RWPE1 (cell line): ENCODE measurements at regions of chr11 and their contacts with region 1.

Region 1: DNA sequence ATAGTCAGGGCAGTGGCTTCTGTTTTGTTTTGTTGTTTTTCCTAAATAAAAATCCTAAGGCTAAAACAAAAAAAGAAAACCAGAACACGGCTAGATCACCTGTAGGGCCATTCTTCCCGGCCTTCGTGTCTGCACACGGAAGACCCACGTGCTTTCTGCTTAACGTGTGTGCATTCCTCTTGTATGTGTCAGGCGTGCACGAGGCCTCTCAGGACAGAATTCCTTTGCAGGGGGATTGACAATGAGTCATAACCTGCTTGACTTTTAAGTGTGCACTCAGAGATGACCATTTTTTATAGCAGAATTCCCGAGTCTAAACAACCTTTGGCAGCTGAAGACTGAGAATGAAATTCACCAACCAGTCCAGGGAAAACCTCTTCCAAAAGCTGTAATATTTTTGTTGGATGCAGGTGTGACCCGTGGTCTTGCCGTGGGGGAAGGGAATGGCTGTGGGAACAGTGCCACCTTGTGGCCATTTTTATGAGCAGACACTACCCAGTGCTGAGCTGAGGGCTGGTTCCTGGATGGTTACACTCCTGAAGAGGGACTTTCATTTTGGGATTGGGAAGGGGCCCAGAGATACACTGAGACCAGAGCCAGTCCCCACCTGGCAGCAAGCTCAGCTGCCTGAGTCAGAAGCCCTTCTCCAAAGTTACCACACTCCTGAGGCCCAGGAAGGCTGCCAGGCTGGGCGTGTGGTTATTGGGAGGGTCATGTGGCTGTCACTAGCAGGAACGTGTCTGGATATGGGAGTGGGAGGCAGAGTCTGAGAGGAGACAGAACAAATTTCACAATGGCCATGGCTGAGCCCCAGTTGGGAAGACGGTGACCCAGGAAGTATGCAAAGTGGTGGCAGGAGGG is 35.8 kb upstream of the DKK3 start:
- DNase-seq: peak; percentile 94
- H3K27ac ChIP-seq: peak overlapping the region; percentile 96
- CTCF ChIP-seq: peak; percentile 86

Region 2: GRCh38 chr11:11810764-11811726 is 233.1 kb before region 1 on chr11:
- CTCF ChIA-PET with region 1: no interaction called
- POLR2A ChIA-PET with region 1: no interaction called
- DNase-seq: no peak
- H3K27ac ChIP-seq: no peak overlapping the region
- CTCF ChIP-seq: no peak

Region 3: DNA sequence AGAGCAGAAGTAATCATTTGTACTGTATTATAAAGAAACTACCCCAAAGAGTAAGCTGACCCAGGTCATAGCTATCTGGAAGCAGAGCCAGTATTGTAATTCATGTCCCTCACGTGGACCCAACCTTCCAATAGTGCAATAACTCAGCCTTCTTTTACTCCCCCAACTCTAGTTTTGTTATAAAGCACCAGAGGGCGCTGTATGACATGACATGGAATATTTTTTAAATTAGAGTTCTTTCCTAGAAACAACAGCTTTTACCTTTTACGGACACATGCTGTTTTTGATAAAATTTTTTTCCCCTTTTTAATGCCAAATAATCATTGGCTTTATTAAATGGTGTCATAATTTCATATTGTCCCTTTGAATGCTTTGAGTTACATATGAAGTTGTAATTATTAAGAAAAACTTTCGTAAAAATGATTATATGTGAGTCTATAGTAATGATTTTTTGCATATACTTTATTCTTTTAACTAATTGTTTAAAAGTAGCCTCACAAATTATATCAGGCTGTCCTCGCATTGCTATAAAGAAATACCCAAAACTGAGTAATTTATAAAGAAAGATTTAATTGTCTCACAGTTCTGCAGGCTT is 112.6 kb before region 1 on chr11:
- CTCF ChIA-PET with region 1: interaction called, 15 read pairs
- POLR2A ChIA-PET with region 1: no interaction called
- DNase-seq: peak; percentile 57
- H3K27ac ChIP-seq: no peak overlapping the region
- CTCF ChIP-seq: peak; percentile 70

Region 4: GRCh38 chr11:12281571-12282478 is 237.6 kb after region 1 on chr11:
- CTCF ChIA-PET with region 1: interaction called, 13 read pairs
- POLR2A ChIA-PET with region 1: no interaction called
- DNase-seq: peak; percentile 77
- H3K27ac ChIP-seq: peak overlapping the region; percentile 26
- CTCF ChIP-seq: peak; percentile 91